B cell (primary cell): ENCODE measurements at regions of chr15 and their contacts with region 1.

Region 1: DNA sequence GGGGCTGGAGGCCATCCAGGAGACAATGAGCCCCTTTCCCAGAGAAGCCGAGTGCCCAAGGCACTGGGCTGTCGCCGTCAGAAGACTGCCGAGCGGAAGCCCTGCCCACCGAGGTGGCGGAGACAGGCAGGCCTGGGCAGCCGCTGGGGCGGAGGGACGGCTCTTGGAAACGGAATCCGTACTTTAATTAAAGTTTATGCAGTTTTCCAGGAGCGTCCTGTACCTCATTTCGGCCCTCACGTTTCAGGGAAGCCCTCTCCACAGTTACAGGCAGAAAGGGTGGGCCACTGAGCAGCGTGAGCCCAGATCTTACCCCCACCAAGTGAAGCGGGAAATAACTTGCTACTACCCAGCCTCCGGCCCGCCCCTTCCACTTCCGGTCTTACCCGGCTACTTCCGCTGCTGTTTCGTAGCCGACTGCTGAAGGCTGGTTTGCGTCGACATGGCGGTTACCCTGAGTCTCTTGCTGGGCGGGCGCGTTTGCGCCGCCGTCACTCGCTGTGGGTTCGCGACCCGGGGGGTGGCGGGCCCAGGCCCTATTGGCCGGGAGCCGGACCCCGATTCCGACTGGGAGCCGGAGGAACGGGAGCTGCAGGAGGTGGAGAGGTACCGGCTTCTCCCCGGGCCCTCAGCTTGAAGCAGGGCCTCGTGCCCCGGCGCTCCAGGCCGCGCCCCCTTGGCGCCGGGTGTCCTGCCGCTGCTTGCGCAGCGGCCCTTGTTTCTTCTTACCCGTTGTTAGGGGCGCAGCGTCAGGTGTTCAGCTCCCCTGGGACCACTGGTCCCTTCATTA is at the start of gene NGRN:
- DNase-seq: peak; percentile 97
- ATAC-seq: peak; percentile 86
- H3K4me3 ChIP-seq: peak within 1 kb of the TSS; percentile 69 to 83 (median 79)
- H3K4me3 Mint-ChIP-seq: peak within 1 kb of the TSS; percentile 95
- H3K27ac ChIP-seq: peak within 1 kb of the TSS; percentile 95 to 99
- H3K27ac Mint-ChIP-seq: peak within 1 kb of the TSS; percentile 98
- H3K4me1 ChIP-seq: peaks cover 36 to 38% of the 10 kb centered on the region in 2 donors
- H3K4me1 Mint-ChIP-seq: peaks cover 52% of the 10 kb centered on the region
- H3K27me3 ChIP-seq: no peaks in the 10 kb centered on the region
- H3K27me3 Mint-ChIP-seq: no peaks in the 10 kb centered on the region
- CTCF ChIP-seq: no peak
- total RNA-seq, gene NGRN: 42.6 and 45.5 TPM in 2 replicates

Region 2: GRCh38 chr15:90249203-90249863 is 16.1 kb before region 1 on chr15 and contains the start of gene TTLL13:
- CTCF ChIA-PET with region 1: interaction called, 3 read pairs
- POLR2A ChIA-PET with region 1: interaction called, 6 read pairs
- intact Hi-C with region 1: loop called (anchors 1 kb)
- DNase-seq: peak; percentile 71
- ATAC-seq: peak; percentile 79
- H3K4me3 ChIP-seq: peak within 1 kb of the TSS in 4 of 5 experiments; percentile 52 to 64 (median 56)
- H3K4me3 Mint-ChIP-seq: peak within 1 kb of the TSS; percentile 74
- H3K27ac ChIP-seq: peak within 1 kb of the TSS in 1 of 2 donors; percentile 39
- H3K27ac Mint-ChIP-seq: peak within 1 kb of the TSS; percentile 3
- H3K4me1 ChIP-seq: peaks cover 0 to 16% of the 10 kb centered on the region in 2 donors
- H3K4me1 Mint-ChIP-seq: peaks cover 16% of the 10 kb centered on the region
- H3K27me3 ChIP-seq: no peaks in the 10 kb centered on the region
- H3K27me3 Mint-ChIP-seq: no peaks in the 10 kb centered on the region
- CTCF ChIP-seq: no peak
- total RNA-seq, gene TTLL13: 0.22 and 0.42 TPM in 2 replicates